ENCODE measurements at regions of chr1 and their contacts with region 1.

Region 1: GRCh38 chr1:220776720-220777326 is 9.9 kb upstream of the MTARC1 start:
- DNase-seq: peak; percentile 83 to 87 (median 86)
- ATAC-seq: peak; percentile 100
- H3K4me3 ChIP-seq: no peak overlapping the region
- H3K27ac ChIP-seq: no peak overlapping the region
- H3K4me1 ChIP-seq: no peaks in the 10 kb centered on the region
- H3K27me3 ChIP-seq: peaks cover 0 to 7% of the 10 kb centered on the region in 2 experiments; a peak in 1 of 5 replicates
- CTCF ChIP-seq: peak; percentile 88 to 97 (median 91)
- EP300 ChIP-seq: no peak
- POLR2A ChIP-seq: no peak
- RAD21 ChIP-seq: peak; percentile 93 to 95

Region 2: DNA sequence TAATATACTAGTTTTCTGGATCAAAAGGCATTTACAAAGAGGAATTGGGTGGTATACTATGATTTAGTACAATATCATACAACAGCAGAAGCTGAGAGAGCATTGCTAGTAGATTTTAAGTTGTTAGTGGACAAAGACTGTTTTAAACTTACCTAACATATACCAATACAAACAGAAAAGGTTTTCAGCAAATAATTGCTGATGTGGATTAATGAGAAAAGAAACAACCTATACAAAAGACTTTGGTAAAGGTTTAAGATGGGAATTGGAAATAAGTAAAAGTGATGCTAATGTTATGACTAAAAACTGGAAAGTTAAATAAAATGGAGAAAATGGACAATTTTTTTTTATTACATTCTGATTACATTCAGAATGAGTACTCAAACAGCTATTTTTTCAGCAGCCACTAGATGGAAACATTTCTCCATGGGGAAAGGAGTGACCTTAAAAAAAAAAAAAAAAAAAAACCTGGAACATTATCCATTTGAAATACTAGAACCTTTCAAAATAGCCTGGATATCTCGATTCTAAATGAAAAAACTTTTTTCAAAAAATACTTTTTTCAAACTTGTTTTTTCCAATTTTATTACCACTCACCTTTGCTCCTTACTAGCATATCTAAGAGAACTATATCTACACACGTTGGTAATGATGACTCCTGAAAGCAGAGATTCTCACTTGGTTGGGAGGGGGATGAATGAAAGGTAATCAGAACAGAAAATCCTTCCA is 785.9 kb before region 1 on chr1:
- CTCF ChIA-PET with region 1: interaction called, 4 read pairs
- POLR2A ChIA-PET with region 1: no interaction called
- in situ Hi-C with region 1: no loop called
- intact Hi-C with region 1: loop called (anchors 5 kb)
- DNase-seq: peak in 3 of 4 experiments; percentile 26 to 56 (median 28)
- ATAC-seq: peak; percentile 52
- H3K4me3 ChIP-seq: no peak overlapping the region
- H3K27ac ChIP-seq: no peak overlapping the region
- H3K4me1 ChIP-seq: no peaks in the 10 kb centered on the region; a peak in 1 of 5 replicates
- H3K27me3 ChIP-seq: no peaks in the 10 kb centered on the region
- CTCF ChIP-seq: peak in 2 of 3 experiments; percentile 28 to 76; a peak in 3 of 6 replicates
- EP300 ChIP-seq: no peak
- POLR2A ChIP-seq: no peak
- RAD21 ChIP-seq: peak; percentile 39 to 48; a peak in 3 of 4 replicates

Region 3: DNA sequence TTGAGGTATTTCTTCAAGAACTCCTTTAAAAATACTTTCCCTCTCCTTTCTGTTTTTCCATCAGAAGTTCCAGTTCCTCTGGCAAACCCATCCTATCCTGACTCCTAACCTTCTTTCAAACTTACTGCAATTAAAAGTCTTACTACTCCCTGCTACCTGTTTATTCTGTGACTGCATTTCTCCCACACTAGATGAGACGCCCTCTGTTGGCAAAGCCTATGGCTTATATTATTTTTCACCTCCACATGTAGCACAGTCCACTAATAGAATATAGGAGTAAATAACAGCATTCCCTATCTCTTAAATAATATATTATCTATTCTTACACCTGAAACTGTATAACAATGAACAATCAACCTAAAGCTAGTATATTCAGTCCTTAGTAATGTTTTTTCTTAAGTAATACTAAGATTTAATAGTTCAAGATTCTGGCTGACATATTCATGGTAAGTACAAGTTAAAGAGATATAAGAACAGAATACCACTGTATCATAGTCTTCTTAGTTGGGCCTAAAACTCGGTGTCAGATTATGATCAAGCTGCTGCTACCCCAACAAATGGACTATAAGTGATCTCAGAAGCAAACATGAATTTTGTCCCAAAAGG is 559.3 kb before region 1 on chr1:
- CTCF ChIA-PET with region 1: interaction called, 7 read pairs
- POLR2A ChIA-PET with region 1: no interaction called
- in situ Hi-C with region 1: no loop called
- intact Hi-C with region 1: loop called (anchors 1 kb)
- DNase-seq: peak in 2 of 4 experiments; percentile 42 to 49
- ATAC-seq: peak; percentile 76
- H3K4me3 ChIP-seq: no peak overlapping the region
- H3K27ac ChIP-seq: no peak overlapping the region
- H3K4me1 ChIP-seq: peaks cover 0 to 9% of the 10 kb centered on the region in 2 experiments; a peak in 1 of 5 replicates
- H3K27me3 ChIP-seq: no peaks in the 10 kb centered on the region
- CTCF ChIP-seq: peak; percentile 56 to 66 (median 63); a peak in 5 of 6 replicates
- EP300 ChIP-seq: no peak
- POLR2A ChIP-seq: no peak
- RAD21 ChIP-seq: no peak; a peak in 1 of 4 replicates

Region 4: DNA sequence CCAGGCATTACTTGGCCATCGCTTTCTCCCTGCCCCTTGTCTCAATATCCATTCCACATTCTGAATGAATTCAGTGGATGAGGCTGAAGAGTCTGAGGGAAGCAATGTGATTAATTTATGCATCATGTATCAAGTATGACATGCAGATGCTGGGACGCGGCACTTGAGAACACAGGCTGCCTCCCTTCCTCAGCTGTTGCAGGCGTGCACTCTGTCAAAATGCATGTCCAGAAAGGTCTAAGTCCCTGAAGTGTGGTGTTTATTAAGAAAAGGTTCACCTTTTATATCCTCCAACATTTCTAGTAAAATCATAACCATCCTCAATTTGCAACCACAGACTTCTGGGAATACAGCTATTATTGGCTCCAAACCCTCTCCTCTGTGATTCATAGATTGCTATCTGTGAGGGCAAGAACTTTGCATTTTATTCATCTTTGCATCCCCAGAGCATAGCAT is 481.9 kb before region 1 on chr1:
- CTCF ChIA-PET with region 1: interaction called, 4 read pairs
- POLR2A ChIA-PET with region 1: interaction called, 3 read pairs
- in situ Hi-C with region 1: no loop called
- intact Hi-C with region 1: loop called (anchors 1 kb)
- DNase-seq: no peak
- ATAC-seq: no peak
- H3K4me3 ChIP-seq: no peak overlapping the region
- H3K27ac ChIP-seq: no peak overlapping the region
- H3K4me1 ChIP-seq: peaks cover 0 to under 1% of the 10 kb centered on the region in 2 experiments; a peak in 3 of 5 replicates
- H3K27me3 ChIP-seq: peaks cover 8 to 12% of the 10 kb centered on the region in 2 experiments; a peak in 4 of 5 replicates
- CTCF ChIP-seq: no peak
- EP300 ChIP-seq: no peak
- POLR2A ChIP-seq: no peak
- RAD21 ChIP-seq: no peak

Region 5: GRCh38 chr1:220544901-220545303 is 231.9 kb before region 1 on chr1:
- CTCF ChIA-PET with region 1: no interaction called
- POLR2A ChIA-PET with region 1: no interaction called
- in situ Hi-C with region 1: no loop called
- intact Hi-C with region 1: loop called (anchors 10 kb)
- DNase-seq: peak in 2 of 4 experiments; percentile 26 to 30
- ATAC-seq: peak; percentile 93
- H3K4me3 ChIP-seq: no peak overlapping the region
- H3K27ac ChIP-seq: no peak overlapping the region
- H3K4me1 ChIP-seq: no peaks in the 10 kb centered on the region
- H3K27me3 ChIP-seq: no peaks in the 10 kb centered on the region; a peak in 1 of 5 replicates
- CTCF ChIP-seq: peak; percentile 19 to 41 (median 40); a peak in 4 of 6 replicates
- EP300 ChIP-seq: no peak
- POLR2A ChIP-seq: no peak
- RAD21 ChIP-seq: 0 out of 4 replicates have a peak, but pooled peaks of 1 of the 2 experiments have one; percentile 15

Region 6: DNA sequence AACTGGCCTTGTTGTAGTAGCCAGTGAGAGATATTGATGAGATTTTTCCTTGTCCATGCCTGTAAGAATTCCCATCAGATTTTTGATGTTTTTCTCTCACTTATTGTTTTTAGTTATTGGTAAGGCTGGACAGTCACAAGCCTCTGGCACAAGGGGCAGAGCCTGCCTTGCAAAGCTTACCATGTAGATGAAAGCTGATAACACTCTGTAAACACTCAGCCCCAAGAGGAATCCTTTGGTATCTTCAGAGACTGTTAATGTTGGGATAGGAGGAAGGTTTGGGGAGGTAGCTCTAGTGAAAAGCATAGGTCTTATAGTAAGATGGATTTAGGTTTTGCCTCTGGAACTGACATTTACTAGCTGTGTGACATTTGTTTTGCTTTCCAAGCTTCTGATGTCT is 211.2 kb before region 1 on chr1:
- CTCF ChIA-PET with region 1: no interaction called
- POLR2A ChIA-PET with region 1: no interaction called
- in situ Hi-C with region 1: no loop called
- intact Hi-C with region 1: no loop called
- DNase-seq: no peak
- ATAC-seq: no peak
- H3K4me3 ChIP-seq: no peak overlapping the region
- H3K27ac ChIP-seq: no peak overlapping the region
- H3K4me1 ChIP-seq: no peaks in the 10 kb centered on the region
- H3K27me3 ChIP-seq: no peaks in the 10 kb centered on the region
- CTCF ChIP-seq: no peak
- EP300 ChIP-seq: no peak
- POLR2A ChIP-seq: no peak
- RAD21 ChIP-seq: no peak

Measured in K562 (cell line).